PC-9 (cell line): ENCODE measurements at regions of chr4 and their contacts with region 1.

Region 1: DNA sequence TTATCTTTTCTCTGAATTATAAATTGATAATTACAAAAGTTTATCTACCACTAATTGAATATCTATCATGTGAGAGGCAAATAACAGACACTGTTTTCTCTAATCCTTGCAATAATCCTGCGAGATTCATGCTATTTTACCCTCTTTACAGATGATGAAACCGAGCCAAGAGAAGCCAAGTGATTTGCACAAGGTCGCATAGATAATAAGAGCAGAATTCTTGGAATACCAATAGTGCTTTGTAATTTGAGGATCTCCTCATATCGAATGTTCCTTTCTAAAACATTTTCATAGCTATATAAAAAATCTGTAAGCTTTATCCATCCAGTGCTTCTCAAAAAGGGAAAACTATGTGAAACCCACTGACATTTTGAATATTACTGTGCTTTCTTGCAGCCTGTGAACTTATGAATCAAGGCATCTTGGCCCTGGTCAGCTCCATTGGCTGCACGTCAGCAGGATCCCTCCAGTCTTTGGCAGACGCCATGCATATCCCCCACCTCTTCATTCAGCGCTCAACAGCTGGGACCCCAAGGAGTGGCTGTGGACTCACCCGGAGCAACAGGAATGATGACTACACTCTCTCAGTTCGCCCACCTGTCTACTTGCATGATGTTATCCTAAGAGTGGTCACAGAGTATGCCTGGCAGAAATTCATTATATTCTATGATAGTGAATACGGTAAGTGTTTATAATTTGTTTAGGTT is 743.8 kb upstream of the ATOH1 start:
- DNase-seq: no peak
- H3K4me3 ChIP-seq: no peak overlapping the region
- H3K27ac ChIP-seq: no peak overlapping the region
- H3K4me1 ChIP-seq: no peaks in the 10 kb centered on the region
- H3K27me3 ChIP-seq: no peaks in the 10 kb centered on the region
- CTCF ChIP-seq: no peak

Region 2: GRCh38 chr4:93132631-93133030 is 47.9 kb after region 1 on chr4:
- CTCF ChIA-PET with region 1: interaction called, 13 read pairs
- POLR2A ChIA-PET with region 1: no interaction called
- intact Hi-C with region 1: no loop called
- DNase-seq: no peak
- H3K4me3 ChIP-seq: no peak overlapping the region
- H3K27ac ChIP-seq: no peak overlapping the region
- H3K4me1 ChIP-seq: no peaks in the 10 kb centered on the region
- H3K27me3 ChIP-seq: no peaks in the 10 kb centered on the region
- CTCF ChIP-seq: no peak